Activated T-helper 1 cell treated with anti-CD3 and anti-CD28 coated beads, Interleukin-12 subunit alpha, Interleukin-12 subunit beta, Interleukin-2, Interleukin-4 antibody, amounts not matched to agents 30 ng/mL and 10 ng/mL and 1 ng/mL, durations not matched to agents 14 hours and 24 hours and 36 hours (primary cell): ENCODE measurements at regions of chr11 and their contacts with region 1.

Region 1: GRCh38 chr11:17230867-17231851 is 23.4 kb upstream of the PIK3C2A start:
- DNase-seq: peak; percentile 44
- H3K4me3 Mint-ChIP-seq: no peak overlapping the region
- H3K27ac Mint-ChIP-seq: peak overlapping the region; percentile 77
- H3K4me1 Mint-ChIP-seq: peaks cover 20% of the 10 kb centered on the region
- H3K27me3 Mint-ChIP-seq: peaks cover 36% of the 10 kb centered on the region

Region 2: GRCh38 chr11:17276236-17277023 is 45.3 kb after region 1 on chr11 and contains the start of gene NUCB2:
- intact Hi-C with region 1: loop called (anchors 1 kb)
- DNase-seq: peak; percentile 95
- H3K4me3 Mint-ChIP-seq: peak within 1 kb of the TSS; percentile 87
- H3K27ac Mint-ChIP-seq: peak within 1 kb of the TSS; percentile 77
- H3K4me1 Mint-ChIP-seq: peaks cover 48% of the 10 kb centered on the region
- H3K27me3 Mint-ChIP-seq: peaks cover 3% of the 10 kb centered on the region
- total RNA-seq, gene NUCB2: 51.1 and 61.7 TPM in 2 replicates

Region 3: GRCh38 chr11:17368176-17368950 is 137.2 kb after region 1 on chr11:
- intact Hi-C with region 1: loop called (anchors 1 kb)
- DNase-seq: no peak
- H3K4me3 Mint-ChIP-seq: no peak overlapping the region
- H3K27ac Mint-ChIP-seq: peak overlapping the region; percentile 33
- H3K4me1 Mint-ChIP-seq: peaks cover 19% of the 10 kb centered on the region
- H3K27me3 Mint-ChIP-seq: peaks cover 12% of the 10 kb centered on the region

Region 4: DNA sequence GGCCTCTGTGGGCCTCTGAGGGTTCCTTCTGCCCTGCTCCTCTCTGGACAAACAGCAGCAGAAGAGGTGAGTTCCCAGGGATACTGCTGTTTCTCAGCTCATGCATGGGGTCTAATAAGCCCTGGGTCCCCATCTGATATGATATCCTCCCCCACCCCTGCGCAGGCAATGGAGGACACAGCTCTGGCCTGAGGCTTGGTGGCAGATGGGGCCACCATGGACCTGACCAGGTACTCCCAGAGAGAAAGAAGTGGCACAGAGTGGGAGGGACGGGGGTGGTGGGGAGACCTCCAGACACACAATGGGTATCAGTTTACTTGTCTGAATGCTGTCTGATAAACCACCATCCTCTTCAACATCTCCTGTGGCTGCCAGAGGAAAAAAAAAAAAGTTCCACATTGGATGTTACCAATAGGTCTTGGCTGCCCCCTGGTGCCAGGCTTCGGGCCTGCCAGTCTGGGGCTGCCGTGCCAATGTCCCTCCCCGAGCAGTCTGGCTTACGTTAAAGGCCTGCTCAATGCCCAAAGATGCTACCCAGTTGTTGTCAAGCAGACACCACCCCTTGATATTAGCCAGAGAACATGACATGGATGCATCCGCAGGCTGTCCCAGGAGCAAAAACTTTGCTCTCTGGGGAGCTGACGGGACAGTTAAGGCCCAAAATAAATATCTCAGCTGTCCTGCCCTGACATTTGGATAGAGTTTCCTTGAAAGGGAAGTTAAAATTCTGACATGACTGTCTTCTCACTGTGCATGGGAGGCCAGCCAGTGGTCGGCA is 273.4 kb after region 1 on chr11:
- intact Hi-C with region 1: loop called (anchors 1 kb)
- DNase-seq: peak; percentile 68
- H3K4me3 Mint-ChIP-seq: no peak overlapping the region
- H3K27ac Mint-ChIP-seq: no peak overlapping the region
- H3K4me1 Mint-ChIP-seq: no peaks in the 10 kb centered on the region
- H3K27me3 Mint-ChIP-seq: peaks cover 11% of the 10 kb centered on the region